Activated B cell treated with CpG ODN at 0.5 μM for 24 hours (primary cell): ENCODE measurements at regions of chr1 and their contacts with region 1.

Region 1: DNA sequence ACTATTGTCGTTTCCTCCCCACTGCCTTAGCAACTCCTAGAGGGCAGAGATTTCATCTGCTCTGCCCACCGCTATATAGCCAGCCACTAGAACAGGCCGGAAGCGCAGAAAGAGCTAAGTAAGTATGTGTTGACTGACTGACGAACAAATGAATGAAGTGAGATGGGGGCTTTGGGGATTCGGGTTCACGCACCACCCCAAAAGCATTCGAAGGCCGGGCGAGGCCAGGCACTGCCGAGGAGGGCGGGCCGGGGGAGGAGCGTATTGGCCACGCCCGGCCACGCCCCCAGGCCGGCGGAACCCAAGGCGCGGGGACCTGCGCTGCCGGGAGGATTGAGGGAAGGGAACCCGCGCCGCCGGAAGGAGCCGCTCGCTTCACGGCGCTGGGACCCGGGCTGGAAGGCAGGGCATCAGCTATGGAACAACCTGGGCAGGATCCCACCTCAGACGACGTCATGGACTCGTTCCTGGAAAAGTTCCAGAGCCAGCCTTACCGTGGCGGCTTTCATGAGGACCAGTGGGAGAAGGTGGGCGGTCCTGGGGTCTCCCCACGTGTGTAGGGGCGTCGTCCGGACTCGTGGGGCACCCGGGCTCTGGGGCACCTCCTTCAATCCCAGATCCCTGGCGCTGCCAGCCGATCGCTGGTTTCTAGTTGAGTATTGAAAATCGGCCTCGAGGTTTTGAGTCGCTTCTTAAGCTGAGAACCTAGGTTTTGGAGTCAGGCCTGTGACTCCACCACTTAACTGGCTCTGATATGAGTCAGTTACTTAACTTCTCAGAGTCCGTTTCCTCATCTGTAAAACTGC is at the start of gene TTC4:
- DNase-seq: peak; percentile 88
- ATAC-seq: peak; percentile 98
- H3K4me3 Mint-ChIP-seq: peak within 1 kb of the TSS; percentile 94
- H3K27ac Mint-ChIP-seq: peak within 1 kb of the TSS; percentile 83
- H3K4me1 Mint-ChIP-seq: peaks cover 30% of the 10 kb centered on the region
- H3K27me3 Mint-ChIP-seq: no peaks in the 10 kb centered on the region
- CTCF ChIP-seq: no peak
- total RNA-seq, gene TTC4: 30.8 and 31.5 TPM in 2 replicates

Region 2: DNA sequence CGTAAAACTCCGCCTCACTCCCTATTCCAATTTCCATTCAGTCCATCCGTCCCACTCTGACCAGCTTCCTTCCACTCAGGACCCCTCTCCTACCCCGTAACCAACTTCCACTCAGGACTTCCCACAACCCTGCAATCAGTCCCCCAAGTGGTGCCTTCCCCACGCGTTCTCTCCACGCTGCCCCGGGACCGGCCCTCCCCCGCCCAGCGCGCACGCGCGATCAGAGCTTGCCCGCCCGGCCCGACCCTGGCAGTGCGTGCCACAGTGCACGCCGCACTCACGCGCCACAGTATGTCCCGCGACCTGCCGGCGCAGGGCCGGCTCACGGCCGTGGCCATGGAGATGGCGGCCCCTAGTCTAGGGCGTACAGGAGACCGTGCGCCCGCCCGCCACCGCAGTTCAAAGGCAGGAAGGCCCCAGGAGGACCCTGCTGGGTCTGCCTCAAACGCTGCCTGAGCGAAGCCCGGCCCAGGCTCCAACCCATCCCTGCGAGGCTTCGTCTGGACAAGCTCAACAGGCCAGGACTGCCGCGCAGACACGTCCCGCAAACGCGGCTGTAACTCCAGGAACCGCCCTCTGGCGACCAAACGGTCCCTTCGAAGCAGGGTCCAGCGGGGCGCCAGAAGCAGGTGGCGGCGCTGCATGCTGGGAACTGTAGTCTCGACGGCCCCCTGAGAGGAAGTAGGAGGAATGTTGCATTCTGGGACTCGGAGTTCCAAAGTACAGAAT is 877.6 kb before region 1 on chr1 and contains the start of gene NDC1:
- CTCF ChIA-PET with region 1: no interaction called
- POLR2A ChIA-PET with region 1: interaction called, 5 read pairs
- intact Hi-C with region 1: loop called (anchors 1 kb)
- DNase-seq: peak; percentile 86
- ATAC-seq: peak; percentile 89
- H3K4me3 Mint-ChIP-seq: peak within 1 kb of the TSS; percentile 94
- H3K27ac Mint-ChIP-seq: peak within 1 kb of the TSS; percentile 98
- H3K4me1 Mint-ChIP-seq: peaks cover 33% of the 10 kb centered on the region
- H3K27me3 Mint-ChIP-seq: no peaks in the 10 kb centered on the region
- CTCF ChIP-seq: no peak
- total RNA-seq, gene NDC1: 10.6 and 14.0 TPM in 2 replicates

Region 3: DNA sequence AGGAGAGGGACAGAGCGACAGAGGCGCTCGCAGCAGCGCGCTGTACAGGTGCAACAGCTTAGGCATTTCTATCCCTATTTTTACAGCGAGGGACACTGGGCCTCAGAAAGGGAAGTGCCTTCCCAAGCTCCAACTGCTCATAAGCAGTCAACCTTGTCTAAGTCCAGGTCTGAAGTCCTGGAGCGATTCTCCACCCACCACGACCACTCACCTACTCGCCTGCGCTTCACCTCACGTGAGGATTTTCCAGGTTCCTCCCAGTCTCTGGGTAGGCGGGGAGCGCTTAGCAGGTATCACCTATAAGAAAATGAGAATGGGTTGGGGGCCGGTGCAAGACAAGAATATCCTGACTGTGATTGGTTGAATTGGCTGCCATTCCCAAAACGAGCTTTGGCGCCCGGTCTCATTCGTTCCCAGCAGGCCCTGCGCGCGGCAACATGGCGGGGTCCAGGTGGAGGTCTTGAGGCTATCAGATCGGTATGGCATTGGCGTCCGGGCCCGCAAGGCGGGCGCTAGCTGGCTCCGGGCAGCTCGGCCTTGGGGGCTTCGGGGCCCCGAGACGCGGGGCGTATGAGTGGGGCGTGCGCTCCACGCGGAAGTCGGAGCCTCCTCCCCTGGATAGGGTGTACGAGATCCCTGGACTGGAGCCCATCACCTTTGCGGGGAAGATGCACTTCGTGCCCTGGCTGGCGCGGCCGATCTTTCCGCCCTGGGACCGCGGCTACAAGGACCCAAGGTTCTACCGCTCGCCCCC is 515.8 kb before region 1 on chr1 and contains the starts of genes CYB5RL and MRPL37:
- CTCF ChIA-PET with region 1: no interaction called
- POLR2A ChIA-PET with region 1: no interaction called
- intact Hi-C with region 1: loop called (anchors 5 kb)
- DNase-seq: peak; percentile 74
- ATAC-seq: peak; percentile 99
- H3K4me3 Mint-ChIP-seq: peak within 1 kb of the TSS; percentile 92
- H3K27ac Mint-ChIP-seq: peak within 1 kb of the TSS; percentile 81
- H3K4me1 Mint-ChIP-seq: peaks cover 32% of the 10 kb centered on the region
- H3K27me3 Mint-ChIP-seq: no peaks in the 10 kb centered on the region
- CTCF ChIP-seq: no peak
- total RNA-seq, gene CYB5RL: 8.4 and 8.7 TPM in 2 replicates
- total RNA-seq, gene MRPL37: 62.5 and 64.1 TPM in 2 replicates

Region 4: DNA sequence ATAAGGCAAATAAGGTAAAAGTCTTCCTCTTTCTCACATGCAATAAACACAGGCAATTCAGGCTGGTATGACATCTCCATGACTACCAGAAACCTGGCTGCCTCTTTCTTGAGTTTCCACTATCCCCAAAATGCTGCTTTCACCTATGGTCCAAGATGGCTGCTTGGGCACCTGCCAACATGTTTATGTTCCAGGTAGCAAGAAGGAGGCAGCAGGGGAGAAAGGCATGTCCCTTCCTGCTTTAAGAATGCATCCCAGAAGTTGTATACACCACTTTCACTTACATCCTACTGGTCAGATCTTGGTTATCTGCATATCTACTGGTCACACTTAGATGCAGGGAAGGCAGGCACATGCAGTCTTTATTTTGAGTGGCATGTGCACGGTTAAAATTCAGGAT is 187.1 kb before region 1 on chr1:
- CTCF ChIA-PET with region 1: no interaction called
- POLR2A ChIA-PET with region 1: interaction called, 10 read pairs
- intact Hi-C with region 1: no loop called
- DNase-seq: no peak
- ATAC-seq: no peak
- H3K4me3 Mint-ChIP-seq: no peak overlapping the region
- H3K27ac Mint-ChIP-seq: no peak overlapping the region
- H3K4me1 Mint-ChIP-seq: no peaks in the 10 kb centered on the region
- H3K27me3 Mint-ChIP-seq: peaks cover 1% of the 10 kb centered on the region
- CTCF ChIP-seq: no peak

Region 5: GRCh38 chr1:54668567-54668966 is 47.1 kb before region 1 on chr1:
- CTCF ChIA-PET with region 1: no interaction called
- POLR2A ChIA-PET with region 1: no interaction called
- intact Hi-C with region 1: no loop called
- DNase-seq: no peak
- ATAC-seq: no peak
- H3K4me3 Mint-ChIP-seq: no peak overlapping the region
- H3K27ac Mint-ChIP-seq: no peak overlapping the region
- H3K4me1 Mint-ChIP-seq: no peaks in the 10 kb centered on the region
- H3K27me3 Mint-ChIP-seq: peaks cover 2% of the 10 kb centered on the region
- CTCF ChIP-seq: no peak

Region 6: DNA sequence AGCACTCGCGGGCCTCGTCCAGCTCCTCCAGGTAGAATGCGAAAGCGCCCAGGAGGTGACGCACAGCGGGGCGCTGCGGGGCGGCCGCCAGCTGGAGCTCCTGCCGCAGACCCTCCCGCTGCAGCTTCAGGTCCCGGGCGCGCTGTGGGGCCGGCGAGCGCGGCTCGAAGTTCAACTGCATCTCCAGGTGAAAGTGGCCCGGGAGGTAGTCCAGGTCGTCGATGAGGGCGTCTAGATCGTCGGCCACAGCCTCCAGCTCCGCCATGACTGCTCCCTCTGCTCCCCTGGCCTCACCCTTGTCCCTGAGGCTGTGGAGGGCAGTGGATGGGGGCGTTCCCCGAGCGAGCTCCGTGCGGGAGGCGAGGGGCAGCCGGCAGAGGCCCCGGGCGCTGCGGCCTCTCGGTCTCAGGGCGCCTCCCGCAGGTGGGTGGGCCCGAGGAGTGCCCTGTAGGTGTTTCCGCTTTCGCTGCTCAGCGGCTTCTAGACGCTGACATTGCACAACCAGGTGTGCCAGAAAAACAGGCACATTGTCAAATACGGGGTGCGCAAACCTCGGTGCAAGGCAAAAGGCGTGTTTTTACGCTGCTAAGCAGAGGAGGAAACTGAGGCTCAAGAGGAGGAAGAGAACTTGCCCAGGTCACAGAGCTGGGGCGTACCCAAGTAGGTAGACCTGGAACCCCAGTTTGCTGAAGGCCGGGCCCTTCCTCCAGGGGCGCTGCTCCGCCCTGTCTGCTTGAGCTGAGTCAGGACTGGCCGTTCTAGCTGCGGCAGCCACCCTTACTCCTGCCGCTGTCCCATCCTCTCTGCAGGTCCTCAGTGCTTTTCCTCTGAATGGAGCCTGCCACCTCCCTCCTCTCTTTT is 85.4 kb after region 1 on chr1 and contains the start of gene TTC22:
- CTCF ChIA-PET with region 1: interaction called, 10 read pairs
- POLR2A ChIA-PET with region 1: interaction called, 15 read pairs
- intact Hi-C with region 1: loop called (anchors 1 kb)
- DNase-seq: peak; percentile 67
- ATAC-seq: peak; percentile 90
- H3K4me3 Mint-ChIP-seq: peak within 1 kb of the TSS; percentile 90
- H3K27ac Mint-ChIP-seq: peak within 1 kb of the TSS; percentile 83
- H3K4me1 Mint-ChIP-seq: peaks cover 29% of the 10 kb centered on the region
- H3K27me3 Mint-ChIP-seq: no peaks in the 10 kb centered on the region
- CTCF ChIP-seq: no peak
- total RNA-seq, gene TTC22: 4.9 and 6.0 TPM in 2 replicates

Region 7: GRCh38 chr1:54886724-54887664 is 171.3 kb after region 1 on chr1 and contains the start of gene DHCR24:
- CTCF ChIA-PET with region 1: no interaction called
- POLR2A ChIA-PET with region 1: no interaction called
- intact Hi-C with region 1: loop called (anchors 5 kb)
- DNase-seq: peak; percentile 71
- ATAC-seq: peak; percentile 95
- H3K4me3 Mint-ChIP-seq: peak within 1 kb of the TSS; percentile 91
- H3K27ac Mint-ChIP-seq: peak within 1 kb of the TSS; percentile 54
- H3K4me1 Mint-ChIP-seq: peaks cover 23% of the 10 kb centered on the region
- H3K27me3 Mint-ChIP-seq: peaks cover 6% of the 10 kb centered on the region
- CTCF ChIP-seq: no peak
- total RNA-seq, gene DHCR24: 49.0 and 55.0 TPM in 2 replicates